CD8-positive, alpha-beta T cell (primary cell): ENCODE measurements at regions of chr5 and their contacts with region 1.

Region 1: DNA sequence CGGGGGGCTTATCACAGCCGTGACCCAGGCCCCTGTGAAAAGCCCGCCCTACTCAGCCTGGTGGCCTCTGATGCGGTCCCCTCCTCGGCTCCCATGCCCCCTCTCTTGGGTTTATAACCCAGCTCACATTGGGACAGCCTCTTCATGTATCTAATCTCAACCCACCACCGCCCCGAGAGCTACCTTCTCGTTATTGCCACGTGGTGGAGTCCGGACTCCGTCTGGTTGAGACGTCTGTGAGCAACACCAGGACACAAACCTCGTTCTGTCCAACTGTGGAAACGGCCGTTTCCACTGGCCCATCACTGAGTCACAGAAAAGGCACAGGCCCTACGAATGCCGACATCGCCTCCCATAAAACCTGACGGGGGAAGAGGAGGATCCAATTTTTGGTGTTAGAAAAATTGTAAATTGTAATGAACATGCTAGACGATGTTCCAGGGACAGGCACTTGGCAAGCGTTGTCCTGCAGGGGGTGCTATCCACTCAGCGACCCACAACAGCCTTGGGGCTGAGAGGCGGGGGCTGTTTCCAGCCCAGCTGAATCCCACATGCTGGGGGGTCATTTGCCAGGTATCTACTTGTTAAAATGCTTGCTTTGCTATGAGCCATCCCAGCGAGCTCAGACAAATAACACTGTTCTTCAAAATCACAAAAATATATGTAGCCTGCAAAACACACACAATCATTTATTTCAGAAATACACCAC is 37.3 kb upstream of the N4BP3 start:
- DNase-seq: peak; percentile 66 to 89 (median 83)
- ATAC-seq: peak; percentile 94
- H3K4me3 ChIP-seq: no peak overlapping the region
- H3K4me3 Mint-ChIP-seq: peak overlapping the region; percentile 39
- H3K27ac ChIP-seq: no peak overlapping the region
- H3K27ac Mint-ChIP-seq: no peak overlapping the region
- H3K4me1 ChIP-seq: peaks cover 5% of the 10 kb centered on the region
- H3K4me1 Mint-ChIP-seq: peaks cover 6% of the 10 kb centered on the region
- H3K27me3 ChIP-seq: no peaks in the 10 kb centered on the region
- H3K27me3 Mint-ChIP-seq: no peaks in the 10 kb centered on the region
- CTCF ChIP-seq: peak; percentile 98

Region 2: GRCh38 chr5:178090858-178091540 is 15.0 kb after region 1 on chr5:
- CTCF ChIA-PET with region 1: interaction called, 27 read pairs
- POLR2A ChIA-PET with region 1: no interaction called
- intact Hi-C with region 1: no loop called
- DNase-seq: no peak
- ATAC-seq: no peak
- H3K4me3 ChIP-seq: no peak overlapping the region
- H3K4me3 Mint-ChIP-seq: no peak overlapping the region
- H3K27ac ChIP-seq: no peak overlapping the region
- H3K27ac Mint-ChIP-seq: no peak overlapping the region
- H3K4me1 ChIP-seq: peaks cover 15% of the 10 kb centered on the region
- H3K4me1 Mint-ChIP-seq: peaks cover 16% of the 10 kb centered on the region
- H3K27me3 ChIP-seq: peaks cover 0 to 3% of the 10 kb centered on the region in 2 experiments
- H3K27me3 Mint-ChIP-seq: peaks cover 2% of the 10 kb centered on the region
- CTCF ChIP-seq: no peak

Region 3: GRCh38 chr5:178120868-178121357 is 44.9 kb after region 1 on chr5:
- CTCF ChIA-PET with region 1: interaction called, 113 read pairs
- POLR2A ChIA-PET with region 1: no interaction called
- intact Hi-C with region 1: loop called in 1 of 2 experiments (anchors 1 kb)
- DNase-seq: peak; percentile 71 to 93 (median 87)
- ATAC-seq: peak; percentile 72
- H3K4me3 ChIP-seq: peak overlapping the region; percentile 9 to 23
- H3K4me3 Mint-ChIP-seq: peak overlapping the region; percentile 60
- H3K27ac ChIP-seq: no peak overlapping the region
- H3K27ac Mint-ChIP-seq: peak overlapping the region; percentile 73
- H3K4me1 ChIP-seq: peaks cover 76% of the 10 kb centered on the region
- H3K4me1 Mint-ChIP-seq: peaks cover 56% of the 10 kb centered on the region
- H3K27me3 ChIP-seq: peaks cover 0 to 3% of the 10 kb centered on the region in 2 experiments
- H3K27me3 Mint-ChIP-seq: no peaks in the 10 kb centered on the region
- CTCF ChIP-seq: peak; percentile 73

Region 4: DNA sequence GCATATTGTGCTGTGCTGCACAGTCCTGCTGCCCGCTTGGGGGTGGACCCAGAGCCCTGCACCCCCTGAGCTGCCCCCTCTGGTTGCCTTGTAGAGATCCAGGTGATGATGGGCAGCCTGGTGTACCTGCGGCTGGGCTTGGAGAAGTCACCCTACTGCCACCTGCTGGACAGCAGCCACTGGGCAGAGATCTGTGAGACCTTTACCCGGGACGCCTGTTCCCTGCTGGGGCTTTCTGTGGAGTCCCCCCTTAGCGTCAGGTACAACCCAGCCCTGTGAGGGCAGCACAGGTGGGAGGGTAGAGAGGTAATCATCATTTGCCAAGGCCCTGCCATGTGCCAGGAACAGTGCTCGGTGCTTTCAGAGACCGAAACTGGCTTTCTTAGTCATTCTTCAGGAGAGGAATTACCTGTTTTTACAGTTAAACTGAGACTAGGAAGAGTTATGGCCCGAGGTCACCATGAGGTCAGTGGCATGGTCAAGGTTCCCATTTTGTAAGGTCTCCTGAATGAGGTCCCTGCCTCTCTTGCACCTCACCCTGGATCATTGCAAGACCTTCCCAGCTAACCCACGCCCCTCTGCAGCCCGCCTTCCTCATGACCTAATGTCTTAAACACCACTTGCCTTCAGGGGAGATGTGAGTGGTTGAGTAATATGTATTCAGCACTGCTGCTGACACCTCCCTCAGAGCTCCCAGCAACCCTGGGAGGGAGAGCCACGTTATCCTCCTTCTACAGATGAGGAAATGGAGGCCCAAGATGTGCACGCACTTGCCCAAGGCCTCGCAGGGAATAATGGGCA is 70.2 kb after region 1 on chr5:
- CTCF ChIA-PET with region 1: interaction called, 411 read pairs
- POLR2A ChIA-PET with region 1: interaction called, 7 read pairs
- intact Hi-C with region 1: loop called (anchors 1 kb)
- DNase-seq: peak; percentile 59 to 85 (median 81)
- ATAC-seq: peak; percentile 99
- H3K4me3 ChIP-seq: no peak overlapping the region
- H3K4me3 Mint-ChIP-seq: no peak overlapping the region
- H3K27ac ChIP-seq: no peak overlapping the region
- H3K27ac Mint-ChIP-seq: no peak overlapping the region
- H3K4me1 ChIP-seq: no peaks in the 10 kb centered on the region
- H3K4me1 Mint-ChIP-seq: peaks cover 7% of the 10 kb centered on the region
- H3K27me3 ChIP-seq: no peaks in the 10 kb centered on the region
- H3K27me3 Mint-ChIP-seq: no peaks in the 10 kb centered on the region
- CTCF ChIP-seq: peak; percentile 73

Region 5: GRCh38 chr5:178163772-178164735 is 88.1 kb after region 1 on chr5:
- CTCF ChIA-PET with region 1: interaction called, 82 read pairs
- POLR2A ChIA-PET with region 1: no interaction called
- intact Hi-C with region 1: loop called (anchors 1 kb)
- DNase-seq: peak; percentile 85 to 98 (median 92)
- ATAC-seq: peak; percentile 100
- H3K4me3 ChIP-seq: no peak overlapping the region
- H3K4me3 Mint-ChIP-seq: no peak overlapping the region
- H3K27ac ChIP-seq: no peak overlapping the region
- H3K27ac Mint-ChIP-seq: no peak overlapping the region
- H3K4me1 ChIP-seq: peaks cover 7% of the 10 kb centered on the region
- H3K4me1 Mint-ChIP-seq: peaks cover 4% of the 10 kb centered on the region
- H3K27me3 ChIP-seq: peaks cover 0 to 6% of the 10 kb centered on the region in 2 experiments
- H3K27me3 Mint-ChIP-seq: peaks cover 10% of the 10 kb centered on the region
- CTCF ChIP-seq: peak; percentile 96

Region 6: DNA sequence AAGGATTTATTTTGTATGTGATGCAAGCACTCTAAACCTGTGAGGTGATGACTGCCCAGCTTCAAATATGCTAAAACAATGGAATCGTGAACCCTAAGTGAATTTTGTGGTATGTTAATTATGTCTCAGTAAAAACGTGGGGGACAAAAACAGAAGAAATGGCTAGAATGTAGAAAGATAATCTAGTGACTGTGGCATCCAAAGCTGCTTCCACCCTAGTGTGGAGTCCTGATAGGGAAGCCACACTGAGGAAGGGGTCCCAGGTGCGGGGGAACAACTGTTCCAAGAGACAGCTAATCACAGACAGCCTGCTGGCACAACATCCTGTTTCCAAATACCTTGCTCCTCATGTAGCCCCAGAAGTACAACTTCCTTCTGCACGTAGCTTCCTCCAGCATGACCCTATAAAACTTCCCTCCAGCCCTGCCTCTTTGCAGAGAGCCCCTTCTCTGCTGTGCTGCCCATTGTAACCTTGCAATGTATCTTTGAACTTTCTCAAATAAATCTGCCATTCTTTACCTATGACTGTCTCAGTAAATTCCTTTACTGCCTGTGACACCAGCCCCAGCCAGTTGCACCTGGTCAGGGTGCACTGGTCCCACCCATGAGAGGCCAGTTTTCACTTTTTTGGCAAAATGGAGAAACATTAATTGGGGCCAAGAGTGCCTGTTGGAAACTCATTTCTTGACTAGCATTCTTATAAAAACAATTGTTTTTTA is 106.3 kb after region 1 on chr5:
- CTCF ChIA-PET with region 1: interaction called, 21 read pairs
- POLR2A ChIA-PET with region 1: no interaction called
- intact Hi-C with region 1: no loop called
- DNase-seq: no peak
- ATAC-seq: no peak
- H3K4me3 ChIP-seq: no peak overlapping the region
- H3K4me3 Mint-ChIP-seq: no peak overlapping the region
- H3K27ac ChIP-seq: no peak overlapping the region
- H3K27ac Mint-ChIP-seq: no peak overlapping the region
- H3K4me1 ChIP-seq: no peaks in the 10 kb centered on the region
- H3K4me1 Mint-ChIP-seq: peaks cover 7% of the 10 kb centered on the region
- H3K27me3 ChIP-seq: no peaks in the 10 kb centered on the region
- H3K27me3 Mint-ChIP-seq: peaks cover 9% of the 10 kb centered on the region
- CTCF ChIP-seq: no peak

Region 7: GRCh38 chr5:179166886-179167841 is 1091.2 kb after region 1 on chr5:
- CTCF ChIA-PET with region 1: no interaction called
- POLR2A ChIA-PET with region 1: no interaction called
- intact Hi-C with region 1: no loop called
- DNase-seq: peak; percentile 38 to 85 (median 60)
- ATAC-seq: peak; percentile 93
- H3K4me3 ChIP-seq: peak overlapping the region; percentile 43 to 57
- H3K4me3 Mint-ChIP-seq: peak overlapping the region; percentile 58
- H3K27ac ChIP-seq: no peak overlapping the region
- H3K27ac Mint-ChIP-seq: no peak overlapping the region
- H3K4me1 ChIP-seq: peaks cover 10% of the 10 kb centered on the region
- H3K4me1 Mint-ChIP-seq: peaks cover 2% of the 10 kb centered on the region
- H3K27me3 ChIP-seq: no peaks in the 10 kb centered on the region
- H3K27me3 Mint-ChIP-seq: peaks cover 11% of the 10 kb centered on the region
- CTCF ChIP-seq: peak; percentile 95